ENCODE measurements at regions of chr6 and their contacts with region 1.

Region 1: DNA sequence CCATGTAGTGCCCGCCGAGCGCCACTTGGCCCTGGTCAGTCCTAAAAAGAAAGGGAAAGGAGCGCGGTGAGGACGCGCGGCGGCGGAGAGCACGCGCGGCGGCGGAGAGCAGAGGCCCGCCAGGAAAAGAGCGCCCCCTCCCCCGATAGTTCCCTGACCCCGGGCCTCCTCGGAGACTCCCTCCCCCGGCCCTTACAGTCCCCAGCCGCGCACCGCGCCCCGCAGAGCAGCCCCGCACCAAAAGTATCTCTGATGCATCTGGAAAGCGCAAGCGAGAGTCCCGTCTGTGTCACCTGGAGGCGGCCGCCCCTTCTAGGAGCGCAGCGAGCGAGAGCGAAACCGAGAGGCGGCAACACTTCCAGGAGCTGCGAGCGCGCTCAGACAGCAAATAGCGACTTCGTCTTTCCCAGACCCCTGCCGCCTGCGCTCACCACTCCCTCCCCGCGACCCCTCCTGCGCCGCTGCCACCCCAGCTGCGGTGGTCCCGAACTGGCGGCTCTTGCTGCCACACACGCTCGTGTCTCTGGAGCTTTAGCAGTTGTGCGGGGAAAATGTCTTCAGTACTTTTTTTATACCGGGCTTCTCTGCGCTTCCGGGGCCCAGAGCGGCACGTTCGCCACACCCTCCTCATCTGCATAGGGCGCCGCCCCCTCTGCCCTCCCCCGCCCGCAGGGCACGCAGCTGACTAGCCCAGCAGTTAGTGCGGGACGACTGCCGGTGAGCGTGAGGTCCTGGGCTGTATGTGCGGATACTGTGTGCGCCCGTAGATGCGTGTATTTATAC is at the start of gene TENT5A:
- DNase-seq: peak; percentile 67
- H3K4me3 ChIP-seq: peak within 1 kb of the TSS; percentile 95
- H3K27me3 ChIP-seq: no peaks in the 10 kb centered on the region
- CTCF ChIP-seq: peak; percentile 20; the same call in 1 of the 2 replicates
- polyA plus RNA-seq, gene TENT5A: 9.7 and 19.8 TPM in 2 replicates

Region 2: GRCh38 chr6:81766482-81767069 is 14.2 kb after region 1 on chr6:
- CTCF ChIA-PET with region 1: interaction called, 12 read pairs
- POLR2A ChIA-PET with region 1: interaction called, 9 read pairs
- DNase-seq: peak; percentile 89
- H3K4me3 ChIP-seq: no peak overlapping the region
- H3K27me3 ChIP-seq: no peaks in the 10 kb centered on the region
- CTCF ChIP-seq: no peak

Region 3: GRCh38 chr6:81777586-81778268 is 25.4 kb after region 1 on chr6:
- CTCF ChIA-PET with region 1: no interaction called
- POLR2A ChIA-PET with region 1: no interaction called
- DNase-seq: no peak
- H3K4me3 ChIP-seq: no peak overlapping the region
- H3K27me3 ChIP-seq: no peaks in the 10 kb centered on the region
- CTCF ChIP-seq: no peak

Region 4: DNA sequence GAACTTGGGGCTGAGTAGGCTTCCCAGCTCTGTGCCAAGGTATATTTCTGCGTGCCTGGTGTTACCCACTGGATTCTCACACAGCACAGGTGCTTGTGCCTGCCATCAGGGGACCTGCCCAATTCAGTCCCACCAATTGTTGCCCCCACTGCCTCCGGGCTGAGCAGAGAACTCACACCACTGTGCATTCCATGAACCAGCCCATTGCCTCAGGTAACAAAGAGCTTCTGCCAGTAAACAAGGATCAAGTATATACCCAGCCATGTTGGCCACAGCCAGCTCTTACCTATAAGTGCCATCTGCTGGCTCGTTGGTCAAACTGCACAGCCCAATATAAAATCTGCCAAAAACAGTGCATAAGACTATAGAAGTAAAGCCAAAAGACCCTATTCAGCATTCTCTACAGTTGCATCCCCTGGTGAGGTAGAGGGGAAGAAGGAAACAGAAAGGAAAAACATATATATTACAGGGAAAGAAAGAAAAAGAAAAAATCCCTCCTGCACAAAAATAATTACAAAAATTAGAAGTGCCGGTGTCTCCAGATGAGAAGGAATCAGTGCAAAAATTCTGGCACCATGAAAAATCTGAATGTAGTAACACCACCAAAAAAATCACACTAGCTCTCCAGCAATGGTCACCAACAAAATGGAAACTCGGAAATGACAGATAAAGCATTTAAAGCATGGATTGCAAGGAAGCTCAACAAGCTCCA is 253.9 kb after region 1 on chr6:
- CTCF ChIA-PET with region 1: interaction called, 20 read pairs
- POLR2A ChIA-PET with region 1: no interaction called
- DNase-seq: no peak
- H3K4me3 ChIP-seq: no peak overlapping the region
- H3K27me3 ChIP-seq: no peaks in the 10 kb centered on the region
- CTCF ChIP-seq: peak; percentile 71